HEK293 (cell line): ENCODE measurements at regions of chr1 and their contacts with region 1.

Region 1: GRCh38 chr1:17045634-17046333 is 8.0 kb downstream of the SDHB start:
- H3K4me3 ChIP-seq: no peak overlapping the region
- H3K27ac ChIP-seq: no peak overlapping the region
- H3K4me1 ChIP-seq: no peaks in the 10 kb centered on the region
- CTCF ChIP-seq: peak; percentile 51; the same call in 1 of the 2 replicates

Region 2: GRCh38 chr1:16618719-16619118 is 427.1 kb before region 1 on chr1:
- CTCF ChIA-PET with region 1: interaction called, 13 read pairs
- POLR2A ChIA-PET with region 1: no interaction called
- H3K4me3 ChIP-seq: no peak overlapping the region
- H3K27ac ChIP-seq: no peak overlapping the region
- H3K4me1 ChIP-seq: peaks cover 6% of the 10 kb centered on the region
- CTCF ChIP-seq: no peak

Region 3: DNA sequence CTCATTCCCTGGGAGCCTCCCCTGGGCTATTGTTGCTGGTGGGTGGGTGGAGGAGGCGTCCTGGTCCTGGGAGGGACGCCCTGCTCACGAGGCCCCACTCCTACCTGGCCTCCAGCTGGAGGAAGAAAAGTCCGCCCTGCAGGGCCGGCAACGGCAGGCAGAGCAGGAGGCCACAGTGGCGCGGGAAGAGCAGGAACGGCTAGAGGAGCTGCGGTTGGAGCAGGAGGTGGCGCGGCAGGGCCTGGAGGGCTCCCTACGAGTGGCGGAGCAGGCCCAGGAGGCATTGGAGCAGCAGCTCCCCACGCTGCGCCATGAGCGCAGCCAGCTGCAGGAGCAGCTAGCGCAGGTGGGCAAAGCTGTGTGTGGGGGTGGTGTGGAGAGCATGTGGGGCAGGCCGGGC is 99.1 kb before region 1 on chr1:
- CTCF ChIA-PET with region 1: interaction called, 71 read pairs
- POLR2A ChIA-PET with region 1: no interaction called
- H3K4me3 ChIP-seq: no peak overlapping the region
- H3K27ac ChIP-seq: no peak overlapping the region
- H3K4me1 ChIP-seq: no peaks in the 10 kb centered on the region
- CTCF ChIP-seq: no peak

Region 4: GRCh38 chr1:16960560-16961296 is 85.1 kb before region 1 on chr1:
- CTCF ChIA-PET with region 1: interaction called, 115 read pairs
- POLR2A ChIA-PET with region 1: interaction called, 3 read pairs
- H3K4me3 ChIP-seq: peak overlapping the region; percentile 36
- H3K27ac ChIP-seq: peak overlapping the region; percentile 87
- H3K4me1 ChIP-seq: peaks cover 3% of the 10 kb centered on the region; the same call in 1 of the 2 replicates
- CTCF ChIP-seq: peak; percentile 94

Region 5: GRCh38 chr1:17013491-17014320 is 32.1 kb before region 1 on chr1:
- CTCF ChIA-PET with region 1: interaction called, 10 read pairs
- POLR2A ChIA-PET with region 1: no interaction called
- H3K4me3 ChIP-seq: no peak overlapping the region
- H3K27ac ChIP-seq: no peak overlapping the region
- H3K4me1 ChIP-seq: peaks cover 2% of the 10 kb centered on the region; the same call in 1 of the 2 replicates
- CTCF ChIP-seq: no peak

Region 6: DNA sequence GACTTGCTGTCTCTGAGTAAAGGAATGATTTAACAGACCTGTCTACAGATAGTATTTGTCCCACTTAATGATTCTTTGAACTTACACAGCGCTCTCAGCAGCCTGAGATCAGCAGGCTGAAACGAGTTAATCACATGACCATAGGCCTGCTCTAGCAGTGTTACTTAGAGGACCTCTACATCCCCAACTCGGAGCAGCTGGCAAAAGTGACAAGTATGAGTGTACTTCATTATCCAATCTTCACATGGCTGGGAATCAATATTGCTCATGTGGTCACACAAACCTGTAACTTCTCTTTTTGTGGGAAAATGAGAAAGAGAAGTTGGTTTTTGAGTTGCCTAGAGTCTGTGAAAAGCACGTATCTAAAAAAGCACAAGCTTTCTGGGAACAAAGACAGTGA is 22.7 kb before region 1 on chr1:
- CTCF ChIA-PET with region 1: interaction called, 12 read pairs
- POLR2A ChIA-PET with region 1: no interaction called
- H3K4me3 ChIP-seq: no peak overlapping the region
- H3K27ac ChIP-seq: no peak overlapping the region
- H3K4me1 ChIP-seq: no peaks in the 10 kb centered on the region
- CTCF ChIP-seq: no peak

Region 7: DNA sequence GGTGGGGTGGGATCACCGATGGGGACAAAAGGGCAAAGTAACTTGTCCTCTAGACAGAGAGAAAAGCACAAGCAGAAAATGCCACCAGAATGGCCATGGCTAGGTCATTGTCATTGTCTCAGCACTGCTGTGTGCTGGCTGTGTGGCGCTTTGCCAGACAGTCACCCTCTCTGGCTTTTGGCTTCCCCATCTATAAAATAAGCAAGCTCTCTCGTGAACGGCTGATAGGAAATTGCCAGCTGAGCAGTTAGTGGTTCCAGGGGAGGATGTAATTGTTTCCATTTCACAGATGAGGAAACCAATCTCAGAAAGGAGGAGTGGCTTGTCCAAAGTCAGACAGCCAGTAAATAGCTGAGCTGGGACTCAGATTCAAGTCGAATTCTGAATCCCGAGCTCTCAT is 41.0 kb after region 1 on chr1:
- CTCF ChIA-PET with region 1: no interaction called
- POLR2A ChIA-PET with region 1: no interaction called
- H3K4me3 ChIP-seq: no peak overlapping the region
- H3K27ac ChIP-seq: no peak overlapping the region
- H3K4me1 ChIP-seq: no peaks in the 10 kb centered on the region
- CTCF ChIP-seq: no peak